Heart right ventricle (tissue), 16 donors: ENCODE measurements at regions of chrX and their contacts with region 1.

Region 1: GRCh38 chrX:30495468-30495867 is 82.1 kb downstream of the TASL start:
- DNase-seq: no peak
- ATAC-seq: no peak
- H3K4me3 ChIP-seq: no peak overlapping the region
- H3K27ac ChIP-seq: no peak overlapping the region
- H3K4me1 ChIP-seq: no peaks in the 10 kb centered on the region
- H3K27me3 ChIP-seq: peaks cover 0 to 7% (median 0%) of the 10 kb centered on the region in 7 donors
- CTCF ChIP-seq: no peak

Region 2: DNA sequence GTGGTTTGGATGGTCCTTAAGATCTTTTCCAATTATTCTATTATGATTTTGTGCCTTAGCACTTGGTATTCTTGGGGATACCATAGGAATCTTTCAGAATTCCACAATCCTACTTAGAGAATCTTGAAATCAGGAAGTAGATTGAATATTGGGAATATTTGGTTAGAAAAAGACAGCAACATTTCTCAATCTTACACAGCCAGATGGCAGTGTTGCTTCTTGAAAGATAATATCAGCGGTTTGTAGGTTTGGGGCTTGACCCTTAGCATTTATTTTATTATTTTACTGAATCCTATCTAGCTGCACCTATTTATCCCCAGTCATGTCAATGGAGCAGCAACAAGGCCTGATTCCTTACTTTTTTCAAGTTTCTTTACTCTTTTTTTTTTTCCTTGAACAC is 220.0 kb before region 1 on chrX:
- intact Hi-C with region 1: loop called in 6 of 10 experiments (anchors 5 to 10 kb)
- DNase-seq: no peak
- ATAC-seq: no peak
- H3K4me3 ChIP-seq: no peak overlapping the region
- H3K27ac ChIP-seq: no peak overlapping the region
- H3K4me1 ChIP-seq: no peaks in the 10 kb centered on the region
- H3K27me3 ChIP-seq: peaks cover 0 to 31% (median 0%) of the 10 kb centered on the region in 7 donors
- CTCF ChIP-seq: peak in 4 of 9 donors; percentile 18 to 37 (median 26)